ENCODE measurements at regions of chr7 and their contacts with region 1.

Region 1: GRCh38 chr7:76314042-76314721 is 11.7 kb downstream of the HSPB1 start:
- DNase-seq: peak; percentile 92 to 100 (median 97)

Region 2: GRCh38 chr7:75762314-75762917 is 551.8 kb before region 1 on chr7:
- intact Hi-C with region 1: no loop called
- DNase-seq: peak in 9 of 42 donors; percentile 4 to 60 (median 28)

Region 3: DNA sequence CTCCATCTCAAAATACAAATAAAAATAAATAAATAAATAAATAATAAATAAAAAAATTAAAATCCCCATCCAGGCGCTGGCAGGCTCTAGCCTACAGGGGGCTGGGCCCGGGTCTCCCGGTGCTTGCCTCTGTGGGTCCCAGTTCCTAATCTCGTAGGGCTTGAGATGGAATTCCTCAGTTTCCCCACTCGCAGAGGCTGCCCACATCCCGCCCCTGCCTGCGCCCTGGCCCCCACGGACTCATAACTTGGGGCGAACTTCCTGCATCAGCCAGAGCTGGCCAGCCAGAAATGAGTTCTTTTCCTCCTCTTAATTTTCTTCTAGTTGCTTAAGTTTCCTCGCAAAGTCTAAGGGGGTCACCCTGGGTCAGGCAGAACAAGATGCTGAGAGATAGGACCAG is 134.5 kb before region 1 on chr7:
- intact Hi-C with region 1: loop called (anchors 5 kb)
- DNase-seq: no peak

Region 4: DNA sequence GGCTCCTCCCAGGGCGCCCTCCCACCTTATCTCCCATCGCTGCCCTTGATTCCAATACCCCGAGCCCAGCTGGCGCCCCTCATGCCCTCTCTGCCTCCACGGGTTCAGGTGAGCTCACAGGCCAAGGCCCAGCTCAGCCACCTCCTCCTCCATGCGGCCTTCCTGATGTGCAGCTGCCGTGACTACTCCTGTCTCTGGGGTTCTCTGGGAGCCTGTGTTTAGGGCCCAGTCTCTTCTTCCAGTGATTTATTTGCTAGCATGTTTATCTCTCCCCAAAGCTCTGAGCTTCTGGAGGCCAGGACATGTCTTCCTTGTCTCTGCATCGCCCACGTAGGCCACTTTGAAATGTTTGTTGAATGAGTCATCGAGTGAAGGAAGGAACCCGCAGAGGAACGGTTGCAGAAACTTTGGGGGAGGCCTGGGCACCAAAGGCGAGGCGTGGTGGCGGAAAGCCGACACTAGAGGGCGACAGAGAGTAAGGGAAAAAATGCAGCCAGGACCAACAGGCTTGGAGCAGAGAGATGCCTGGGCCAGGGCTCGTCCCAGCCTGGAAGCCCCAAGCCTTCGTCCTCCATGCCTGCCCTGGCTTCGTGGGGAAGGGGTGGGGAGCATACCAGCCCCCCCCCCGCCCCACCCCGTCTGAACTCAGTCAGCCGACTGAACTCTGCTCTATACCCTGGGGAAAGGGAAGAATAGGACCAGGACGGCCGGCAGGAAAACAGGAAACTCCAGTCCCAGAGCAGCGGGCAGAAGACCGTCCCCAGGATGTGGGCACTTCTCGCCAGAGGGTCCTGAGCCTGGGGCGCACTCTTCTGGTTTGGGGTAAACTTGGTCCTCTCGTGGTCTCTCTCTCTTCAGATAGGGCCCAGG is 22.6 kb before region 1 on chr7:
- intact Hi-C with region 1: loop called (anchors 1 kb)
- DNase-seq: peak; percentile 75 to 97 (median 93)

Region 5: GRCh38 chr7:76359111-76359978 is 45.2 kb after region 1 on chr7:
- intact Hi-C with region 1: loop called (anchors 2 kb)
- DNase-seq: peak; percentile 95 to 100 (median 99)